Ascending aorta (tissue), 2 donors: ENCODE measurements at regions of chr4 and their contacts with region 1.

Region 1: DNA sequence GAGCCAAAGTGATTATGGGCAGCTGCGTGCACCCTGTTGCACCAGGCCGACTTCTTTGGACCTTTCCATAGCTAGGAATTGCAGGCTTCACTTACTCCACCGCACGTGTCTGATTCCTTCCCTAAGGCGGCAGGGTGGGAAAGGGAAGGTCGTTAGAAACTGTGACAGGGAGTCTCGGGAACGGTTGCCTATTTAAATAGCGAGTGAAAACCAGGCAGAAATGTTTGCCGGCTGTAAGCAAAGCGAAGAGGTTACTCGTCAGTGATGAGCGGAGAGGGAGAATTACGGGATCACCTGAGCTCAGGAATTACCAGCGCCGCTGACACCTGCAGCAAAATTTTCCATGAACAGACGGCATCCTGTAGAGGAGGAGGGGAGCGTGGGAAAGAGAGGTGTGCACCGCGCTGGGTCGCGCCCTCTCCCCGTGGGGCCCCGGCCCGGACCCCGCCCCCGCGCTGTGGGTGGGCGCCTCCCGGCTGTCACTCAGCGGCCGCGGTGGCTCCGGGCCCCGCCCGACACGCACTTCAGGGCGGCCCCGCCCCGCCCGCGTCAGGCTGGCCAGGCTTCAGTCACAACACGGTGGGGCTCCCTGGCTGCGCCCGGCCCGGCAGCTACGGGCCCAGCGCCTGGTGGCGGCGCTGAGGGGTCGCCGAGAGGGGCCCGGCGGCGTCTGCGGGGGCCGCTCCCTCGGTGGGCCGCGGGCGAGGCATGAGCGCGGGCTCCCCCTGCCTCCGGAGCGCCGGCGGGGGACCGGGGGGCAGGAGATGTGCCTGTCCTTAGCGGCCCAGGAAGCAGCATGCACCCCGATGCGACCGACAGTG is at the start of gene SNX25:
- DNase-seq: peak; percentile 58 to 93
- H3K4me3 ChIP-seq: peak within 1 kb of the TSS; percentile 63 to 86
- H3K27ac ChIP-seq: peak within 1 kb of the TSS; percentile 84 to 95
- H3K4me1 ChIP-seq: peaks cover 0 to 14% of the 10 kb centered on the region in 2 donors
- H3K27me3 ChIP-seq: no peaks in the 10 kb centered on the region
- CTCF ChIP-seq: peak in 1 of 3 experiments; percentile 39
- total RNA-seq, gene SNX25: 18.7 TPM

Region 2: GRCh38 chr4:185286571-185286970 is 77.3 kb after region 1 on chr4:
- intact Hi-C with region 1: loop called (anchors 5 kb)
- DNase-seq: no peak
- H3K4me3 ChIP-seq: no peak overlapping the region
- H3K27ac ChIP-seq: peak overlapping the region; percentile 52 to 81
- H3K4me1 ChIP-seq: peaks cover 2 to 18% of the 10 kb centered on the region in 2 donors
- H3K27me3 ChIP-seq: no peaks in the 10 kb centered on the region
- CTCF ChIP-seq: no peak

Region 3: GRCh38 chr4:185358514-185358913 is 149.3 kb after region 1 on chr4:
- intact Hi-C with region 1: loop called (anchors 5 kb)
- DNase-seq: peak in 1 of 2 donors; percentile 79
- H3K4me3 ChIP-seq: no peak overlapping the region
- H3K27ac ChIP-seq: peak overlapping the region; percentile 84 to 90
- H3K4me1 ChIP-seq: peaks cover 4 to 48% of the 10 kb centered on the region in 2 donors
- H3K27me3 ChIP-seq: no peaks in the 10 kb centered on the region
- CTCF ChIP-seq: no peak